ENCODE measurements at regions of chr1 and their contacts with region 1.

Region 1: GRCh38 chr1:23122023-23122748 is 46.5 kb downstream of the LUZP1 start:
- DNase-seq: peak in 1 of 2 donors; percentile 32
- ATAC-seq: peak in 7 of 8 donors; percentile 18 to 63 (median 43)
- H3K4me3 ChIP-seq: no peak overlapping the region
- H3K27ac ChIP-seq: peak overlapping the region in 5 of 10 donors; percentile 8 to 68 (median 42)
- H3K4me1 ChIP-seq: peaks cover 7 to 94% (median 75%) of the 10 kb centered on the region in 9 donors
- H3K27me3 ChIP-seq: no peaks in the 10 kb centered on the region
- CTCF ChIP-seq: no peak

Region 2: DNA sequence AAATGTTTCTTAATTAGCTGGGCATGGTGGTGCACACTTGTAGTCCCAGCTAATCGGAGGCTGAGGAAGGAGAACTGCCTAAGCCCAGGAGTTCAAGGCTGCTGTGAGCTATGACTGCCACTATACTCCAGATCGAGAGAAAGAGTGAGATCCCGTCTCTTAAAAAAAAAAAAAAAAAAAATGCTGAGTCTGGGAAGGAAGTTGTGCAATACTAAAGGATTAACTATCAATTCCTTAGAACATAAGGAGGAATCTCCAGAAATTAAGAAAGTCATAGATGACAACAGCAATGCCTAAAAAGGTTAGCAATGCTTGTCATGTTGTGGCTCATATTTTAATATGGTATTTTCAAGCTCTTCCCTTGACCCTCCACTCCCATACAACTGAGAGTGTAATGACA is 41.2 kb after region 1 on chr1:
- intact Hi-C with region 1: loop called in 3 of 10 experiments (anchors 5 kb)
- DNase-seq: no peak
- ATAC-seq: no peak
- H3K4me3 ChIP-seq: no peak overlapping the region
- H3K27ac ChIP-seq: peak overlapping the region in 1 of 10 donors; percentile 18
- H3K4me1 ChIP-seq: peaks cover 3 to 81% (median 65%) of the 10 kb centered on the region in 9 donors
- H3K27me3 ChIP-seq: no peaks in the 10 kb centered on the region
- CTCF ChIP-seq: no peak

Region 3: GRCh38 chr1:23168457-23169194 is 46.4 kb after region 1 on chr1 and contains the start of gene LUZP1:
- intact Hi-C with region 1: loop called in 3 of 10 experiments (anchors 5 kb)
- DNase-seq: peak; percentile 91 to 92
- ATAC-seq: peak; percentile 92 to 98 (median 94)
- H3K4me3 ChIP-seq: peak within 1 kb of the TSS; percentile 54 to 95 (median 90)
- H3K27ac ChIP-seq: peak within 1 kb of the TSS; percentile 87 to 98 (median 96)
- H3K4me1 ChIP-seq: peaks cover 6 to 69% (median 46%) of the 10 kb centered on the region in 9 donors
- H3K27me3 ChIP-seq: no peaks in the 10 kb centered on the region
- CTCF ChIP-seq: peak in 1 of 9 donors; percentile 21
- total RNA-seq, gene LUZP1: 26.3 to 40.1 (median 32.2) TPM